SK-N-SH (cell line): ENCODE measurements at regions of chr2 and their contacts with region 1.

Region 1: GRCh38 chr2:210250622-210251021 is 25.4 kb upstream of the ACADL start:
- DNase-seq: no peak
- H3K4me3 ChIP-seq: no peak overlapping the region
- H3K27ac ChIP-seq: no peak overlapping the region
- H3K4me1 ChIP-seq: no peaks in the 10 kb centered on the region
- H3K27me3 ChIP-seq: no peaks in the 10 kb centered on the region
- CTCF ChIP-seq: no peak
- EP300 ChIP-seq: no peak
- RAD21 ChIP-seq: no peak

Region 2: DNA sequence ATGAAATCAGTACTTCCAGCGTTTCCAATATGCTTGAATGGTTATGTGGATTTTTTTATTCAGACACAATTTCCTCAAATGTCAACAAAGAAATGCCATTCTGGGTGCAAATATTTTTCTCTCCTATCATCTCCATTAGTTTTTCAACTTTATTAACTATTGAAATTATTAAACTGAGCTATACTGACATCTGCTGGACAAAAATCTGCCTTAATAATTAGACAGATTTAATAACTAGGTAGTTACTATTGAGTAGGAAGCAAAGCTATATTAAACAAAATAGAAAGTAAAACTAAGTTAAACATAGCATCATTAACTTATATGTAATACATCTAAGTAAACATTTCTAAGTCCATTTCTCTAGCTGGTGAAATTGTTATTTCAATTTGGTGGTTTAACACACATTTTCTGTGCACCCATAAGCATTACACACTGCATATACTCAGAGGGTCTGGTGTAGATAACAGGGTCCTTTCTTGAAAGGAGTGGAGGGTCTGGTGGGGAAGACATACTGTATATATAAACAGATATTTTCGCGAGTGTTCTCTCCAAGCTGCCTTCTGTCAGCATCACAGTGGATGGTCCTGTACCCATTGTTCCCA is 148.9 kb after region 1 on chr2:
- CTCF ChIA-PET with region 1: interaction called, 20 read pairs
- POLR2A ChIA-PET with region 1: no interaction called
- DNase-seq: no peak
- H3K4me3 ChIP-seq: no peak overlapping the region; a peak in 1 of 4 replicates
- H3K27ac ChIP-seq: no peak overlapping the region
- H3K4me1 ChIP-seq: no peaks in the 10 kb centered on the region
- H3K27me3 ChIP-seq: no peaks in the 10 kb centered on the region
- CTCF ChIP-seq: peak; percentile 76
- EP300 ChIP-seq: no peak
- RAD21 ChIP-seq: peak; percentile 35

Region 3: DNA sequence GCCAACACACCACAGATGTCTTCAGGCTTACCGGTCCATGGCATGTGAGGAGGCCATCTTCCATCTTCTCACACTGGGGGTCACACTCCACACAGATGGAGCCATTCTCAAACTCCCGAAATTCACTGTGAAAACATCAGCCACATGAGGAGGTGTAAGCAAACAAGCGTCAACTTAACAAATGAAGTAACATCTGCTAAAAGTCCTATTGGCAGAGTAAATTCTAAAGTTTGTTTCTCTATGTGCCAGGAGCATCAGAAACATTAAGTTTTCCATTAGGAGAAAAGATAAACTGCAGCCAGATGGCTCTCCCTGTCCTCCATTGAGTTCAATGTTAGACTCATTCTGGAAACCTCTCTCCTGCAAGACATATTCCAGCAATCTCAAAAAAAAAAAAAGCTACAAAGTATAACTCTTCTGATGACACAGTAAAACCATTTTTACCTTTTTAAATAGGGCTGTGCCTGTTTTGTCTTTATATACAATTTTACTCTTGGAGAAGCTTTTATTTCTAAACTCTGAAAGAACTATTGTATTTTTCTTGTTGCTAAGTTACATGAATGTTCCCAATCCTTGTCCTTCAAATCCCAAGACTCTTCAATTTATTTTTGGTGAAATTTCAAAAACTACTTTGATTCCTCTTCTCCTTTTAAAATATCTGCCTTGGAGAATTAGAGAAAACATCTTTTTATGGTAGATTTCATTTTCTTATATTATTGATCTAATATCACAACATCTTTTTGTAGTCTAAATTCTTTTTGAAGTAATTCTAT is 1422.7 kb after region 1 on chr2:
- CTCF ChIA-PET with region 1: no interaction called
- POLR2A ChIA-PET with region 1: no interaction called
- DNase-seq: no peak
- H3K4me3 ChIP-seq: no peak overlapping the region
- H3K27ac ChIP-seq: no peak overlapping the region
- H3K4me1 ChIP-seq: no peaks in the 10 kb centered on the region
- H3K27me3 ChIP-seq: no peaks in the 10 kb centered on the region
- CTCF ChIP-seq: no peak
- EP300 ChIP-seq: no peak
- RAD21 ChIP-seq: no peak